Activated CD4-positive, alpha-beta T cell treated with anti-CD3 and anti-CD28 coated beads, Interleukin-2, amount 10 ng/mL, durations not matched to agents 24 days and 14 days (primary cell): ENCODE measurements at regions of chr5 and their contacts with region 1.

Region 1: DNA sequence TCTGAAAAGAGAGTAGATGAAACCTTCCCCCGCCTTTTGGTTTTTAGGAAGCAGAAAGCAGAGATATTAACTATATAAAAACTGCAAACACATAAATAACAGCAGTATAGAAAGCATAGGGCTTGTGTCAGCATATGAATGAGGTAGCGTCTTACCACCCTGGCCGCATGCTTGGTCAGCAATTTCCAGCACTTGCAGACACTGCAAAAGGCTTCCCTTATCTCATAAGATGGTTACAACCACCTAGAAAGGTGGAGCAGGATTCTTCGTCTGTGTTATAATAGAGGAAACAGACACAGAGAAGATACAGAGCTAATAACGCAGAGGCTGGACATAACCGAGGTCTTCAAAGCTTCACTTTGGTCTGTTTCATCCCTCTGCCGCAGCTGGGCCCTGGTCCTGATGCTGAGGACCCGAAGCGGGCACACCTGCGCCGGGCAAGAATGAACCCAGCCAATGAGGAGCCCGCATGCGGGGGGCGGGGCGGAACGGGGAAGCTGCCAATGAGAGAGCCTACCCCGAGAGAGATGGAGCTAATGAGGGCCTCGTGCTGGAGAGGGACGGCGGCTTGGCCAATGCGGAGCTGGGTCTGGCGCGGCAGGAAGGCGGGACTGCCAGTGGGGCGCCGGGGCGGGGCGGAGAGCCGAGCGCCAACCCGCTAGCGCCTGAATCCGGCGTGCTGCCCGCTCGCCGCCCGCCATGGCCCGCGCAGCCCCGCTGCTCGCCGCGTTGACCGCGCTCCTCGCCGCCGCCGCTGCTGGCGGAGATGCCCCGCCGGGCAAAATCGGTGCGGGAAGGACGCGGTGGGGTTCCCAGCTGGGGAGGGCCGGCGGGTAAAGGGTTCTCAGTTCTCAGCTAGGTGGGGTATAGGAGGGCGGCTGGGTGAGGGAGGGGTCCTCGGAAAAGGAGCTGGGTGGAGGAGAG is at the start of gene PCYOX1L:
- DNase-seq: peak; percentile 99
- H3K4me3 Mint-ChIP-seq: peak within 1 kb of the TSS; percentile 90
- H3K27ac Mint-ChIP-seq: peak within 1 kb of the TSS; percentile 83
- H3K4me1 Mint-ChIP-seq: peaks cover 60% of the 10 kb centered on the region
- H3K27me3 Mint-ChIP-seq: no peaks in the 10 kb centered on the region
- total RNA-seq, gene PCYOX1L: 19.8 and 21.2 TPM in 2 replicates

Region 2: DNA sequence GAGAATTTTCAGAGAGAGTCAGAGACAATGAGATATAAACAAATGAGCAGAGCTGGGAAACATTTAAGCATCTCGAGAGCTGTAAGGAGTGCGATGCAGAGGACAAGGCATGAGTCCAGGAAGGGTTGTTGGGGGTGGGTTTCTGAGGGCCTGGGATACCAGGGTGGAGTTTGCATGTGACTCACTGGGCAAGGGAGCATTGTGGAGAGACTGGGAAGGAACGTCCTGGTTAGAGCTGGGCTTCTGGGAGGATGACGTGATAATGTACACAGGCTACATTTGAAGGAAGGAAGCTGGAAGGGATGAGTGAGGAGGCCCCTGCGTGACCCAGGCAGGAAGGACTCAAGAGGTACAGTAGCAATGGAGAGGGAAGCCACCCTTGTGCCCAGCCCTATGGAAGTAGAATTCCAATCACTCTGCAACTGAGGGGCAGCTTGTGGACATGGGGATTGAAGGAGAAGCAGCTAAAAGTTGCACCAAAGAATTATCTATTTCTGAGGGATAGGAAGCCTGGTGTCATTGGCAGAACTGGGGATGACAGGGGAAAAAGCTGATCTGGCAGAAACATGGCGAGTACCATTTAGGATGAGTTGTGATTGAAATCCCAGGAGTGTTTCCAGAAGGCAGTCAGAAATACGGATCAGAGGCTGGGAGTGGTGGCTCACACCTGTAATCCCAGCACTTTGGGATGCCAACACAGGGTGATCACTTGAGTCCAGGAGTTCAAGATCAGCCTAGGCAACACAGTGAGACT is 145.3 kb before region 1 on chr5:
- intact Hi-C with region 1: no loop called
- DNase-seq: no peak
- H3K4me3 Mint-ChIP-seq: no peak overlapping the region
- H3K27ac Mint-ChIP-seq: no peak overlapping the region
- H3K4me1 Mint-ChIP-seq: no peaks in the 10 kb centered on the region
- H3K27me3 Mint-ChIP-seq: peaks cover 2% of the 10 kb centered on the region

Region 3: DNA sequence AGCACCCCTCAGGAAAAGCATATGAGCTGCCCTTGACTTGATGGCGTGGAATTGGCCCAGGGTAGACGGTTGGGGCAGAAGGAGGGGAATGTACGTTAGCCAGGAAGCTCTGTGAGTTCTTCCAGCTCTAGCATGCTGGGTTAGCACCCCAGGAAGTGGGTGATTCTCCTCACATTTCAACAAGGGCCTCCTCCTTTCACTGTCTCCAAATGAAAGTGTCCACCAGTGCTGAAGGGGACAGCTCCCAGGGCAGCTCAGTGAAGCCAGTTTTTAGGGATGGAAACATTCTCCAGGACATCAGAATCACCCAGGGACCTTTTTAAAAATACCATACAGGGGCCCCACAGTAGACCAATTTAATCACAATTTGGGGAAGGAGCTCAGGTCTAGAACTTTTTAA is 103.1 kb before region 1 on chr5:
- intact Hi-C with region 1: no loop called
- DNase-seq: no peak
- H3K4me3 Mint-ChIP-seq: no peak overlapping the region
- H3K27ac Mint-ChIP-seq: no peak overlapping the region
- H3K4me1 Mint-ChIP-seq: no peaks in the 10 kb centered on the region
- H3K27me3 Mint-ChIP-seq: peaks cover 12% of the 10 kb centered on the region

Region 4: DNA sequence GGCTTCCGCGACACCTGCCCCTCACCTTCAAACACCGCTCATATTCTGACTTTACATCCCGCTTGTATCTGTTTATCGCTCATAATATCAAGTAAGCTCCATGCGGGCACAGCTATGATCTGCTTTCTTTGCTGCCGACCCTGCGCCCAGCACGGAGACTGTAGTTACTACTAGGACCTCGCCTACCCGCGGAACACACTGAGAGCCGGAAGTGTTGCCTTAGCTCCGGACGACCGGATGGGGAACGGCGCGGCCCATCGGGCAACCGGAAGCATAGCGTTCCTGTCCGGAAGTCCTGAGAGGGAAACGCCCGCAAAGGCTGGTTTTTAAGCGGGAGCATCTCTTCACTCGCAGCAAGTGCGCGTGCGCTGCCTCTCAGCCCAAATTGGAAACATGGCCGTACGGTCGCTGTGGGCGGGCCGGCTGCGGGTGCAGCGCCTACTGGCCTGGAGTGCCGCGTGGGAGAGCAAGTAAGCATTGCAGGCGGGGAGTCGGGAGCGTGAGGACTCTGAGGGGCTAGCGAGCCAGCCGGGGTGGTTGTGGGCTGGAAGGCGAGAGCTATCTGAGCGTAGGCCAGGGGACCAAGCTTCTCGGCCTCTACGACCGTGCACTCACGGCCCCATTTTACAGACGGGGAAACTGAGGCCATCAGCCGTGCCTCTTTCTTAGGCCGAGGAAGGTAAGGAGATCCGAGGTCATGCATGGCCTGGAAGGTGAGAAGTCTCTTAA is 12.3 kb before region 1 on chr5 and contains the start of gene GRPEL2:
- intact Hi-C with region 1: loop called (anchors 1 kb)
- DNase-seq: peak; percentile 97
- H3K4me3 Mint-ChIP-seq: peak within 1 kb of the TSS; percentile 96
- H3K27ac Mint-ChIP-seq: peak within 1 kb of the TSS; percentile 97
- H3K4me1 Mint-ChIP-seq: peaks cover 46% of the 10 kb centered on the region
- H3K27me3 Mint-ChIP-seq: peaks cover 1% of the 10 kb centered on the region
- total RNA-seq, gene GRPEL2: 30.6 and 30.7 TPM in 2 replicates